A673 (cell line): ENCODE measurements at regions of chr1 and their contacts with region 1.

Region 1: GRCh38 chr1:869499-870244 is 54.1 kb upstream of the SAMD11 start:
- DNase-seq: peak; percentile 73
- H3K4me3 ChIP-seq: peak overlapping the region; percentile 31
- H3K27ac ChIP-seq: no peak overlapping the region
- H3K4me1 ChIP-seq: no peaks in the 10 kb centered on the region
- H3K27me3 ChIP-seq: no peaks in the 10 kb centered on the region
- CTCF ChIP-seq: peak; percentile 62

Region 2: DNA sequence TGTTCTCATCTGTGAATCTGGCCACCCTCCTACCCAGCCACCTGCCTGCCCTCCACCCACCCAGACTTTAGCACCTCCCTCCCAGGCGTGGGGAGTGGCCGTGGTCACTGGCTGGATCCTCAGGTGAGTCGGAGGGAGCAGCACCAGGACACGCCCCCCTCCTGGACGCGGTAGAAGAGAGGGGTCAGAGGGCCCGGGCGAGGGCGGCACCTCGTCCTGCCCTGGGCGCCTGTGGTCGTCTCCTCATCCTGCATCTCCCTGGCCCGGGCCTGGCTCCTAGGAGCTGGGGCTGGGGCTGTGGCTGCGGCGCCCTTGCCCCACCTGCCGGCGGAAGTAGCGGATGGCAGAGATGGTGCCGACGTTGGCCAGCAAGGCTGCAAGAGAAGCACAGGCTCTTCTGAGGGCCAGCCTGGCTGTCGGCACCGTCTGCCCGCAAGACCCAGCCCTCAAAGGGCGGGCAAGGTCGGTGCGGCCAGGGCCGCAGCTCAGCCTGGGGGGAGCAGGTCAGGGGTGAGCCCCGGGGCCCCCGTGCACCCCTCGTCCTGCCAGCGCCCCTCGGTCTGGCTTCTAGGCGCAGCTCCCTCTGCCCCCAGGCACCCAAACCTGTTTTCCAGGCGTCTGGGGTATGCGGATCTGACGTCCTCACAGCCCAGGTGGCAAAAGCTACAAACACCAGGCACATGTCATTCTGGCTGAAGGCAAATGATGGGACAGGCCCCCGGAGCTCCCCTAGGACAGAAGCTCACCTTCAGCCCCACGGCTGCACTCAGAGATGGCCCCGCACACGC is 106.4 kb after region 1 on chr1:
- CTCF ChIA-PET with region 1: no interaction called
- POLR2A ChIA-PET with region 1: no interaction called
- intact Hi-C with region 1: loop called (anchors 5 kb)
- DNase-seq: peak; percentile 90
- H3K4me3 ChIP-seq: peak overlapping the region; percentile 48
- H3K27ac ChIP-seq: peak overlapping the region; percentile 62
- H3K4me1 ChIP-seq: peaks cover 8% of the 10 kb centered on the region
- H3K27me3 ChIP-seq: peaks cover 13% of the 10 kb centered on the region
- CTCF ChIP-seq: peak; percentile 77

Region 3: DNA sequence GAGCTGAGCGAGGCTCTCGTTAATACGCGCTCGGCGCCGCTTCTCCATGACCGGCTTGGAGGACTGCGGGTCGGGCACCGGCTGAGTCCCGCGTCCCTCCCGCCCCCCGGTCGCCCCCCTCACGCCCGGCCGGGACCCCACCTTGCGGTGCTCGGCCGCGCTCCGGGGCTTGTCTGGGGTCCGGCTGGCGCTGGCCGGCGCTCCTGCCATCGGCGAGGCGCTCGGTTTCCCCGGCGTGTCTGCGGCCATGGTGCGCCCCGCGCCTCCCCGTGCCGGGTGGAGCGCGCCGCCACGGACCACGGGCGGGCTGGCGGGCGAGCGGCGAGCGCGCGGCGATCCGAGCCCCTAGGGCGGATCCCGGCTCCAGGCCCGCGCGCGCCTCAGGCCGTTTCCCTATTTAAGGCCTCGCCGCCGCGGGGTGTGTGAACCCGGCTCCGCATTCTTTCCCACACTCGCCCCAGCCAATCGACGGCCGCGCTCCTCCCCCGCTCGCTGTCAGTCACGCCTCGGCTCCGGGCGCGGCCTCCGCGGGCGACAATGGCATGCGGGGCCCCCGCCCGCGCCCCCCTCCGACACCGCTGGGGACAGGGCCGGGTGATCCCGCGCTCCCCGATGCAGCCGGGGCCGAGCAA is 130.2 kb after region 1 on chr1 and contains the start of gene HES4:
- CTCF ChIA-PET with region 1: no interaction called
- POLR2A ChIA-PET with region 1: no interaction called
- intact Hi-C with region 1: no loop called
- DNase-seq: peak; percentile 95
- H3K4me3 ChIP-seq: peak within 1 kb of the TSS; percentile 70
- H3K27ac ChIP-seq: peak within 1 kb of the TSS; percentile 98
- H3K4me1 ChIP-seq: peaks cover 16% of the 10 kb centered on the region
- H3K27me3 ChIP-seq: no peaks in the 10 kb centered on the region
- CTCF ChIP-seq: no peak
- total RNA-seq, gene HES4: 18.5 and 20.8 TPM in 2 replicates